ENCODE measurements at regions of chr1 and their contacts with region 1.

Region 1: GRCh38 chr1:117895482-117896114 is 33.8 kb downstream of the GDAP2 start:
- DNase-seq: peak; percentile 38 to 69
- H3K4me3 ChIP-seq: no peak overlapping the region
- H3K4me3 Mint-ChIP-seq: no peak overlapping the region
- H3K27ac Mint-ChIP-seq: no peak overlapping the region
- H3K4me1 ChIP-seq: no peaks in the 10 kb centered on the region
- H3K4me1 Mint-ChIP-seq: no peaks in the 10 kb centered on the region
- H3K27me3 ChIP-seq: no peaks in the 10 kb centered on the region
- H3K27me3 Mint-ChIP-seq: no peaks in the 10 kb centered on the region
- CTCF ChIP-seq: peak; percentile 55 to 56

Region 2: GRCh38 chr1:117512743-117513321 is 382.8 kb before region 1 on chr1:
- CTCF ChIA-PET with region 1: interaction called, 6 read pairs
- POLR2A ChIA-PET with region 1: no interaction called
- intact Hi-C with region 1: loop called (anchors 2 kb)
- DNase-seq: peak in 1 of 2 experiments; percentile 19
- H3K4me3 ChIP-seq: no peak overlapping the region
- H3K4me3 Mint-ChIP-seq: no peak overlapping the region
- H3K27ac Mint-ChIP-seq: no peak overlapping the region
- H3K4me1 ChIP-seq: no peaks in the 10 kb centered on the region
- H3K4me1 Mint-ChIP-seq: no peaks in the 10 kb centered on the region
- H3K27me3 ChIP-seq: no peaks in the 10 kb centered on the region
- H3K27me3 Mint-ChIP-seq: no peaks in the 10 kb centered on the region
- CTCF ChIP-seq: peak; percentile 22 to 44

Region 3: GRCh38 chr1:117632269-117633067 is 263.1 kb before region 1 on chr1:
- CTCF ChIA-PET with region 1: interaction called, 4 read pairs
- POLR2A ChIA-PET with region 1: no interaction called
- intact Hi-C with region 1: loop called (anchors 10 kb)
- DNase-seq: peak in 1 of 2 experiments; percentile 15
- H3K4me3 ChIP-seq: no peak overlapping the region
- H3K4me3 Mint-ChIP-seq: no peak overlapping the region
- H3K27ac Mint-ChIP-seq: no peak overlapping the region
- H3K4me1 ChIP-seq: peaks cover 15% of the 10 kb centered on the region
- H3K4me1 Mint-ChIP-seq: peaks cover 30% of the 10 kb centered on the region
- H3K27me3 ChIP-seq: no peaks in the 10 kb centered on the region
- H3K27me3 Mint-ChIP-seq: no peaks in the 10 kb centered on the region
- CTCF ChIP-seq: no peak

Region 4: DNA sequence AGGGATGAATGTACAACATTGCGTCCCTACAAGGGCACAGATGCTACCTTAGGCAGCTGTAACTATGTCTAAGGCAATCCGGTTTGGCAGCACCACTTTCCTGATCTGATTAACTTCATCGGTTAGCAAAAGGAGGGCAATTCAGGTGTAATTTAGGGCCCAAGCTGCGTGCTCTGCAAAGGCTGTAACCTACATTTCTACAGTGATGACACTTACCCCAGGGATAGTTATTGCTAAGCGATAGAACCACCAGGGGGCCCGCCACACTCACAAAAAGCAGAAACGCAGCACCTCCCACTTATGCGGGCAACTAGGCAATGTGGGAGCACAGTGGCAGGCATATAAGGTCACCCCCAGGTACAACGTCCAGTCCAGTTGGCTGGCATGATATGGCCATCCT is 79.7 kb before region 1 on chr1:
- CTCF ChIA-PET with region 1: no interaction called
- POLR2A ChIA-PET with region 1: no interaction called
- intact Hi-C with region 1: loop called (anchors 2 kb)
- DNase-seq: no peak
- H3K4me3 ChIP-seq: no peak overlapping the region
- H3K4me3 Mint-ChIP-seq: no peak overlapping the region
- H3K27ac Mint-ChIP-seq: no peak overlapping the region
- H3K4me1 ChIP-seq: no peaks in the 10 kb centered on the region
- H3K4me1 Mint-ChIP-seq: no peaks in the 10 kb centered on the region
- H3K27me3 ChIP-seq: no peaks in the 10 kb centered on the region
- H3K27me3 Mint-ChIP-seq: no peaks in the 10 kb centered on the region
- CTCF ChIP-seq: no peak